ENCODE measurements at regions of chr12 and their contacts with region 1.

Region 1: DNA sequence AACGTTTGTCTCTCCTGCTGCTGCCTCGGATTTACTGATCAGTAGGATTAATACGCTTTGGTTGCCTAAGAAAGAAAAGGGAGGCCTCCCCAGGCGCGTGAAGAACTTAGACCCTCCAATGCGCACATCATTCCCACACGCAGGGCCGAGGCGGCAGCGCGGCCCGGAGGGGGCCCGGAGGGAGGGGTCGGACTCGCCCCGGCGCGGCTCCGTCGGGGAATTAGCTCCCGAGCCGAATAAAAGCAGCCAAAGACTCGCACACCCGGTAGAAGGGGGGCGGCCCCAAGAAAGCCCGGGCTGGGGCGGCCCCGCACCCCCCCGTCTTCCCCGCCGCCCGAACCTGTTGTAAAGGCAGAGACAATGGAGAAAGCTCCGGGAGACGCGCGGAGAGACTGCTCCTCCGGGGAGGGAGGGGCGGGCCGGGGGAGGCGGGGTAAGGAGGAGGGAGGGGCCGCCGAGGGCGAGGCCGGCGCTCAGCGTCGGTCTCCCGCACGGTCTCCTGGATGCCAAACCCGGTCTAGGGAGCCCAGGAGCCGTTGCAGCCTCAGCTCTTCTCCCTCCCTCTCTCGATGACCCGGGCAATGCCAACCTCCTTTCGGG is at the start of gene NELL2:
- DNase-seq: no peak
- ATAC-seq: peak; percentile 57
- H3K4me3 Mint-ChIP-seq: peak within 1 kb of the TSS; percentile 84
- H3K27ac Mint-ChIP-seq: no peak within 1 kb of the TSS
- H3K4me1 Mint-ChIP-seq: peaks cover 22% of the 10 kb centered on the region
- H3K27me3 Mint-ChIP-seq: peaks cover 35% of the 10 kb centered on the region
- CTCF ChIP-seq: no peak
- total RNA-seq, gene NELL2: 0.10 TPM in 1 of 2 replicates, not detected in the other

Region 2: DNA sequence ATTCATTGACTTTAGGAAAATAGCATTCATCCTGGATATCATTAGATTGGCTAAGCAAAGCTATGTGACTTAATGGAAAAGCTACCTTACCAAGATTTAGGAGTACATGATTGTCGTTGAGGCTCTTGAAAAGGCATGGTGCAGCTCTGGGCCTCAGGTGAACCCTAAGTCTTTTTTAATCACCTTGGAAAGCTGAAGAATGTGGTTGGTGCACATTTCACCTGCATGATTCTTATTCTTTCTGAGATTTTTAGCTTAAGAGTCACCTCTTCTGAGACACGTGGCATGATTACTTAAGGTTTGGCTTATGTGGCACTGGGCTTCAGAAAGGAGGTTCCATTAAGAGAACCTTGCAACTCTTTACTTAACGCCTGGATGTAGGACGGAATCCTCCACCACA is 541.7 kb before region 1 on chr12:
- CTCF ChIA-PET with region 1: no interaction called
- POLR2A ChIA-PET with region 1: no interaction called
- intact Hi-C with region 1: no loop called
- DNase-seq: no peak
- ATAC-seq: no peak
- H3K4me3 Mint-ChIP-seq: no peak overlapping the region
- H3K27ac Mint-ChIP-seq: no peak overlapping the region
- H3K4me1 Mint-ChIP-seq: no peaks in the 10 kb centered on the region
- H3K27me3 Mint-ChIP-seq: no peaks in the 10 kb centered on the region
- CTCF ChIP-seq: no peak

Region 3: GRCh38 chr12:44551631-44552030 is 324.4 kb before region 1 on chr12:
- CTCF ChIA-PET with region 1: no interaction called
- POLR2A ChIA-PET with region 1: no interaction called
- intact Hi-C with region 1: no loop called
- DNase-seq: no peak
- ATAC-seq: no peak
- H3K4me3 Mint-ChIP-seq: no peak overlapping the region
- H3K27ac Mint-ChIP-seq: no peak overlapping the region
- H3K4me1 Mint-ChIP-seq: no peaks in the 10 kb centered on the region
- H3K27me3 Mint-ChIP-seq: no peaks in the 10 kb centered on the region
- CTCF ChIP-seq: no peak

Region 4: GRCh38 chr12:44774815-44775411 is 101.1 kb before region 1 on chr12:
- CTCF ChIA-PET with region 1: interaction called, 3 read pairs
- POLR2A ChIA-PET with region 1: no interaction called
- intact Hi-C with region 1: loop called (anchors 1 kb)
- DNase-seq: no peak
- ATAC-seq: no peak
- H3K4me3 Mint-ChIP-seq: no peak overlapping the region
- H3K27ac Mint-ChIP-seq: no peak overlapping the region
- H3K4me1 Mint-ChIP-seq: no peaks in the 10 kb centered on the region
- H3K27me3 Mint-ChIP-seq: peaks cover 4% of the 10 kb centered on the region
- CTCF ChIP-seq: peak; percentile 78

Region 5: GRCh38 chr12:44812062-44812461 is 64.0 kb before region 1 on chr12:
- CTCF ChIA-PET with region 1: no interaction called
- POLR2A ChIA-PET with region 1: no interaction called
- intact Hi-C with region 1: loop called (anchors 5 kb)
- DNase-seq: no peak
- ATAC-seq: no peak
- H3K4me3 Mint-ChIP-seq: no peak overlapping the region
- H3K27ac Mint-ChIP-seq: no peak overlapping the region
- H3K4me1 Mint-ChIP-seq: no peaks in the 10 kb centered on the region
- H3K27me3 Mint-ChIP-seq: no peaks in the 10 kb centered on the region
- CTCF ChIP-seq: no peak

Region 6: GRCh38 chr12:44847888-44848702 is 28.0 kb before region 1 on chr12:
- CTCF ChIA-PET with region 1: no interaction called
- POLR2A ChIA-PET with region 1: interaction called, 3 read pairs
- intact Hi-C with region 1: loop called (anchors 2 kb)
- DNase-seq: no peak
- ATAC-seq: peak; percentile 78
- H3K4me3 Mint-ChIP-seq: peak overlapping the region; percentile 61
- H3K27ac Mint-ChIP-seq: peak overlapping the region; percentile 84
- H3K4me1 Mint-ChIP-seq: peaks cover 22% of the 10 kb centered on the region
- H3K27me3 Mint-ChIP-seq: no peaks in the 10 kb centered on the region
- CTCF ChIP-seq: no peak